OCI-LY7 (cell line): ENCODE measurements at regions of chr9 and their contacts with region 1.

Region 1: DNA sequence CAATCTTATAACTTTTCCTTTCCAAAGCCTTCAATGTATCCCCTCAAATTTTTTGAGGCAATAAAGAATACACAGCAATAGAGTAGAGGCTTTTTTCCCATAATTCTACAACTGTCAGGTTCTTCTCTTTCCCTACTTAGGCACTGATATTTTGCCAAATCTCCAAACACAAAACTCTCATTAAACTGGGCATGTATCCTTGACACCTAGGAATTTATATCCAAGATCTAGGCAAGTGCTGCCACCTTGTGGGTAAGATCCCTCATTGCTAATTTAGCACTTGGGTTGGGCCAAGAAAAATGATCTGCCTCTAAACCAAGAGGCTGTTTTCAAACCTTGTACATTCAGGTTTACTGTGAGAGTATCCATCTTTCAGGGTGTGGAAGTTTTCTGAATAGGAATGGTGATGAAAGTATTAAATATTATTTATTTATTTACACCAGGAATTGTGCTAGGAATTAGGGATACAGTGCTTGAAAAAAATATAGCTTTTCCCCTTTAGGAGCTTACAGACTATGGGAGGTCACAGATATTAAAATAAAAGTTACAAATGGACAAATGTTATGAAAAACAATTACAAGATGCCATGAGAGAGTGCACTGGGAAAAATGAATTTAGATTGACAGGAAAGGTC is 17.6 kb downstream of the TSTD2 start:
- DNase-seq: peak; percentile 65
- H3K4me3 ChIP-seq: no peak overlapping the region
- H3K27ac ChIP-seq: no peak overlapping the region
- H3K4me1 ChIP-seq: peaks cover 11% of the 10 kb centered on the region
- CTCF ChIP-seq: peak; percentile 93

Region 2: GRCh38 chr9:97386733-97387503 is 228.6 kb before region 1 on chr9:
- CTCF ChIA-PET with region 1: interaction called, 4 read pairs
- POLR2A ChIA-PET with region 1: no interaction called
- intact Hi-C with region 1: loop called (anchors 2 kb)
- DNase-seq: peak; percentile 58
- H3K4me3 ChIP-seq: no peak overlapping the region
- H3K27ac ChIP-seq: no peak overlapping the region
- H3K4me1 ChIP-seq: no peaks in the 10 kb centered on the region
- CTCF ChIP-seq: peak; percentile 90

Region 3: GRCh38 chr9:97411789-97412625 is 203.5 kb before region 1 on chr9 and contains the start of gene TDRD7:
- CTCF ChIA-PET with region 1: no interaction called
- POLR2A ChIA-PET with region 1: no interaction called
- intact Hi-C with region 1: loop called (anchors 5 kb)
- DNase-seq: peak; percentile 88
- H3K4me3 ChIP-seq: peak within 1 kb of the TSS; percentile 91
- H3K27ac ChIP-seq: no peak within 1 kb of the TSS
- H3K4me1 ChIP-seq: peaks cover 20% of the 10 kb centered on the region
- CTCF ChIP-seq: peak; percentile 88
- total RNA-seq, gene TDRD7: 4.0 and 5.5 TPM in 2 replicates

Region 4: GRCh38 chr9:97468658-97469448 is 146.7 kb before region 1 on chr9:
- CTCF ChIA-PET with region 1: no interaction called
- POLR2A ChIA-PET with region 1: interaction called, 4 read pairs
- intact Hi-C with region 1: loop called (anchors 1 kb)
- DNase-seq: peak; percentile 50
- H3K4me3 ChIP-seq: no peak overlapping the region
- H3K27ac ChIP-seq: no peak overlapping the region
- H3K4me1 ChIP-seq: no peaks in the 10 kb centered on the region
- CTCF ChIP-seq: peak; percentile 79

Region 5: DNA sequence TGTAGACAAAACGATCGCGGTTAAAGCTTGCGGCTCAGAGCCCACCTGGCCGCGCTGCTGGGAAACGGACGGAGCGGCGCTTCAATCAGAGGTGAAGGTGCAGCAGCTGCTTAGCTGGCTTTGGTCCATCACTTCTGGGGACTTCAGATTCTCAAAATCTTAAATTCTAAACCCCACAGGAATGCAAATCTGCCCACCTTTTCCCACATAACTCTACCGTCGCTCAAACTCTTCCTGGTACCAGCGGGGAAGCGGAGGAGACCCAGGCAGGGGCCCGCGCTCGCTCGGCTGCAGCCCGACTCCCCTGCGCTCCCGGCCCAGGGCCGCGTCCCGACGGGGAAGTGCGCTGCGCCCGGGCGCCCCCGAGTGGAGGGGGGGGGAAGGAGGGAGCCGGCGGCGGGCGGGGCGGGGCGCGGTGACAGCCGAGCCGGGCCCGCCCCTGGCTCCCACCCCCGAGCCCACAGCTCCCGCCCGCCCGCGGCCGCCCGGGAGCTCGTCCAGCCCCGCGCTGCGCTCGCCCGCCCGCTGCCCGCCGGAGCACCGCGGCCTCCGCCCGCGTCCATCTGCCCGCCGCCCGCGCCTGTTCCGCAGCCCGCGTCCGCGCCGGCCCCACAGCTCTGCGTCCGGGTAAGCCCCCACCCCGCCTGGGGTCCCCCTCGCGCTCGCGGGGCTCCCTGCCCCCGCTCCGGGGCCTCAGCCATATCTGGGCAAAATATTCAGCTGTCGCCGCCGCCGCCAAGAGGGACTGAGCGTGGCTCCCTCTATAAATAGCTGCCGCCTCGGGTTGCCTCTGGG is 114.2 kb before region 1 on chr9 and contains the start of gene TMOD1:
- CTCF ChIA-PET with region 1: no interaction called
- POLR2A ChIA-PET with region 1: no interaction called
- intact Hi-C with region 1: no loop called
- DNase-seq: no peak
- H3K4me3 ChIP-seq: no peak within 1 kb of the TSS
- H3K27ac ChIP-seq: no peak within 1 kb of the TSS
- H3K4me1 ChIP-seq: no peaks in the 10 kb centered on the region
- CTCF ChIP-seq: no peak
- total RNA-seq, gene TMOD1: not detected in 2 replicates